GM12878 (cell line): ENCODE measurements at regions of chr3 and their contacts with region 1.

Region 1: DNA sequence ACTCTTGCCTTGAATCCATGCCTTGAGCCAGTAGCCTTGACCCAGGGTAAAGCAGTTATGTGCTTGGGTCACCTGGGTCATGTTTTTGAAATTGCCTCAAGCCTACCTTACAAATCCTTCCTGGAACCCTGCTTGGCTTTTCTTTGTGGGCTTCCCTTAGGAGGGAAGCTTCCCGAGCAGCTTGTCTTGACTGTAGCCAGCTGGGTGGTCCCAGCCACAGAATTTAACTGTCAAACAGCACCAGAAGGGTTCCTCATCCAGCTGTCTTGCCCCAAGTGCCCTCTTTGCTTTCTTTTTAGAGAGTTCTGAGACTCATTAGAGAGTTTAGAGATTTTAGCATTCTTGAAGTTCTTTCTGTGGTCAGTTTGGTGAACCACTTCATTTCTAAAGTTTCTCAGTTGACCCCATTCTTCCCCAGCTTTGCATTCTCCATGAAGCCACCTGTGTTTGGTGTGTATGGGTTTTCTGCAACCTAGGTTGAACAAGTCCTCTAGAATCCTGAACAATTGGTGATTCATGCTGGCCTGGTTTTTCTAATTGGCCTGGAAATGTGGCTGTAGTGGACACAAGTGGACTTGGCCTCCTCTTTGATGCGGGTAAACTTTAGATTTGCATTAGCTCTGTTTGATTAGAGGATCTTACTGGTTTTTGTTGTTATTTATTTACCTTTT is 33.6 kb downstream of the FLNB start:
- DNase-seq: peak; percentile 88
- ATAC-seq: peak; percentile 88
- H3K4me3 ChIP-seq: no peak overlapping the region
- H3K27ac ChIP-seq: peak overlapping the region; percentile 34; the same call in 1 of the 2 replicates
- H3K4me1 ChIP-seq: peaks cover 57% of the 10 kb centered on the region
- H3K27me3 ChIP-seq: no peaks in the 10 kb centered on the region
- CTCF ChIP-seq: no peak
- EP300 ChIP-seq: peak; percentile 72 to 86
- POLR2A ChIP-seq: no peak
- RAD21 ChIP-seq: no peak

Region 2: GRCh38 chr3:58008140-58009025 is 33.4 kb before region 1 on chr3 and contains the start of gene FLNB:
- CTCF ChIA-PET with region 1: interaction called, 25 read pairs
- POLR2A ChIA-PET with region 1: interaction called, 18 read pairs
- RAD21 ChIA-PET with region 1: interaction called, 37 read pairs
- SMC1A ChIA-PET with region 1: interaction called, 135 read pairs
- in situ Hi-C with region 1: no loop called
- intact Hi-C with region 1: no loop called
- DNase-seq: no peak
- ATAC-seq: peak; percentile 81
- H3K4me3 ChIP-seq: peak within 1 kb of the TSS; percentile 77
- H3K27ac ChIP-seq: peak within 1 kb of the TSS; percentile 45
- H3K4me1 ChIP-seq: peaks cover 16% of the 10 kb centered on the region
- H3K27me3 ChIP-seq: no peaks in the 10 kb centered on the region
- CTCF ChIP-seq: peak; percentile 72 to 95 (median 90)
- EP300 ChIP-seq: no peak
- POLR2A ChIP-seq: peak; percentile 90
- RAD21 ChIP-seq: peak; percentile 91
- polyA plus RNA-seq, gene FLNB: 13.6 to 15.8 TPM

Region 3: DNA sequence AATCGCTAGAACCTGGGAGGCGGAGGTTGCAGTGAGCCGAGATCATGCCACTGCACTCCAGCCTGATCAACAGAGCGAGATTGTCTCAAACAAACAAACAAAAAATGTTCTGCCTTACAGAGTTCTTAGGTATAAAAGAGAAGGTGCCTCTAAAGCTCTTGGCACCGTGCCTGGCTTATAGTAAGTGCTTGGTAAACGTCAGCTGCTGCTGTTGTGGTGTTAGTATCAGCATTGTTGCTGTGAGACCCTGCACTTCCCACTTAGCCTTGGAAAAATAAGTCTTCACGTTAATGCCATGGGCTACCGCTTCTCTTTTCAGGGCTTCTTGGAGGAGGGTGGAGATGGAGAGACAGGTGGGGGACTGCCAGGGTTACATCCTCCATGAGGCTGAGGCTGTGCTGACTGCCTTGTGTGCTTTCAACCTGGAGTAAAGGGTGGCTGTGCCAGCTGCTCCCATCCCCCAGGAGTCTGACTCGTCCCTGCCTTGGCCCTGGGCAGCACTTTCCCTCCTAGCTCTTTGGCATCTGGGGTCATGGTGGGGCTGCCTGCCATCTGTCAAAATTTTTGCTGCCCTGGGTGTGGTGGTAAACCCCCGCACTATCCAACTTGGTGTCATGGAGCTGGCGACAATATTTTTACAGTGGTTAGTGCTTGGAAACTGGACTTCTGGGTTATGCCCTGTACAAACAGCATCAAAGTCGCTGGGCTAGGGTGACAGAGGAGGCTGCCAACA is 15.8 kb before region 1 on chr3:
- CTCF ChIA-PET with region 1: interaction called, 7 read pairs
- POLR2A ChIA-PET with region 1: interaction called, 75 read pairs
- RAD21 ChIA-PET with region 1: interaction called, 12 read pairs
- SMC1A ChIA-PET with region 1: interaction called, 45 read pairs
- in situ Hi-C with region 1: no loop called
- intact Hi-C with region 1: no loop called
- DNase-seq: no peak
- ATAC-seq: no peak
- H3K4me3 ChIP-seq: no peak overlapping the region
- H3K27ac ChIP-seq: no peak overlapping the region
- H3K4me1 ChIP-seq: peaks cover 13% of the 10 kb centered on the region
- H3K27me3 ChIP-seq: no peaks in the 10 kb centered on the region
- CTCF ChIP-seq: no peak
- EP300 ChIP-seq: no peak
- POLR2A ChIP-seq: no peak
- RAD21 ChIP-seq: no peak

Region 4: GRCh38 chr3:58052373-58053273 is 10.8 kb after region 1 on chr3:
- CTCF ChIA-PET with region 1: interaction called, 8 read pairs
- POLR2A ChIA-PET with region 1: interaction called, 6 read pairs
- RAD21 ChIA-PET with region 1: interaction called, 10 read pairs
- SMC1A ChIA-PET with region 1: interaction called, 12 read pairs
- in situ Hi-C with region 1: no loop called
- intact Hi-C with region 1: no loop called
- DNase-seq: no peak
- ATAC-seq: peak; percentile 78
- H3K4me3 ChIP-seq: no peak overlapping the region
- H3K27ac ChIP-seq: no peak overlapping the region
- H3K4me1 ChIP-seq: no peaks in the 10 kb centered on the region
- H3K27me3 ChIP-seq: no peaks in the 10 kb centered on the region
- CTCF ChIP-seq: no peak
- EP300 ChIP-seq: no peak
- POLR2A ChIP-seq: no peak
- RAD21 ChIP-seq: no peak

Region 5: DNA sequence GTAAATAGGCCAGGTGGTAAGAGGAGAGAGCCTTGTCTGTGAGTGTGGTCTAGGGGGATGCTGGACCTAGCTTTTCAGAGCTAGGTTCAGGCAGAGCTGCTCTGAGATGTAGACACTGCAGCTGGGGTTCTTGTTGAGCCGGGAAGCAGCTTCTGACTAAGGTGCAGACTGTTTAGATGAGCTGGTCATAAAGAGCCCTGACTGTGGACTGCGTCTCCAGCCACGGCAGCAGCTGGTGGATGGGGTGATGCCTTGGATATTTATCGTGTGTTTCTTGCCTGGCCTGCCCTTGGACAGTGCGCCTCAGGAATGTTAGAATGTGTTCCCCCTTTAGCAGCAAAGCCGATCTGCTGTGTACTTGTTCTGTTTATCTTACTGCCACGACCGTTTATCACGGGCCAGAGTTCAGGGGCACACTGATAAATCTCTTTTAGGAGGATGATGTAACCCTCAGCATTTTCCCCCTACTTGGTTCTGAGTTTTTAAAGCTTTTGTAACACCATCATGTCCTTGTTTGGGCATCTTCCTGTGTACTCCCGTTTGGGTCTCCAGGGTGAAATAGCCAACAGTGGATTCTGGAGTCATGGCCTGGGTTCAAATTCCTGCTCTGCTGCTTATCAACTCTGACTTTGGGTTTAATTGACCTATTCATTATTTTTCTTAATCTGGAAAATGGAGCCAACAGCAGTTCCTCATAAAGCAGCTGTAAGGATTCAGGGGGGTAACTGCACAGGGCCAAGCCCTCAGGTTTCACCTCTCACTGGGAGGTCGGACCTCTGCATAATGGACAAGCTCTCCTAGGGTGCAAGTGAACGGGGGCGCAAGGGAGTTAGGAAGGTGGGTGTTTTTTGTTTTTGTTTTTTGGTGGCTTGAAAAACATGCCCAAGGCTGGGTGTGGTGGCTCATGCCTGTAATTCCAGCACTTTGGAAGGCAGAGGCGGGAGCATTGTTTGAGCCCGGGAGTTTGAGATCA is 17.8 kb after region 1 on chr3:
- CTCF ChIA-PET with region 1: interaction called, 10 read pairs
- POLR2A ChIA-PET with region 1: interaction called, 4 read pairs
- RAD21 ChIA-PET with region 1: no interaction called
- SMC1A ChIA-PET with region 1: interaction called, 17 read pairs
- in situ Hi-C with region 1: no loop called
- intact Hi-C with region 1: no loop called
- DNase-seq: no peak
- ATAC-seq: no peak
- H3K4me3 ChIP-seq: no peak overlapping the region
- H3K27ac ChIP-seq: no peak overlapping the region
- H3K4me1 ChIP-seq: no peaks in the 10 kb centered on the region
- H3K27me3 ChIP-seq: no peaks in the 10 kb centered on the region
- CTCF ChIP-seq: no peak
- EP300 ChIP-seq: no peak
- POLR2A ChIP-seq: no peak
- RAD21 ChIP-seq: no peak